ENCODE measurements at regions of chr11 and their contacts with region 1.

Region 1: GRCh38 chr11:65540297-65541092 is 15.6 kb downstream of the SCYL1 start:
- DNase-seq: peak; percentile 78 to 93 (median 88)
- ATAC-seq: peak; percentile 85
- H3K4me3 ChIP-seq: peak overlapping the region; percentile 77 to 80
- H3K4me3 Mint-ChIP-seq: peak overlapping the region; percentile 86
- H3K27ac ChIP-seq: peak overlapping the region; percentile 53 to 60
- H3K27ac Mint-ChIP-seq: peak overlapping the region; percentile 71
- H3K4me1 ChIP-seq: peaks cover 15% of the 10 kb centered on the region
- H3K4me1 Mint-ChIP-seq: peaks cover 19% of the 10 kb centered on the region
- H3K27me3 ChIP-seq: no peaks in the 10 kb centered on the region
- H3K27me3 Mint-ChIP-seq: no peaks in the 10 kb centered on the region
- CTCF ChIP-seq: peak; percentile 62

Region 2: GRCh38 chr11:65524741-65525545 is 15.6 kb before region 1 on chr11 and contains the start of gene SCYL1:
- CTCF ChIA-PET with region 1: interaction called, 27 read pairs
- POLR2A ChIA-PET with region 1: interaction called, 17 read pairs
- intact Hi-C with region 1: loop called in 1 of 2 experiments (anchors 1 kb)
- DNase-seq: peak; percentile 77 to 92 (median 83)
- ATAC-seq: peak; percentile 93
- H3K4me3 ChIP-seq: peak within 1 kb of the TSS; percentile 73 to 89
- H3K4me3 Mint-ChIP-seq: peak within 1 kb of the TSS; percentile 84
- H3K27ac ChIP-seq: peak within 1 kb of the TSS; percentile 53 to 68
- H3K27ac Mint-ChIP-seq: peak within 1 kb of the TSS; percentile 91
- H3K4me1 ChIP-seq: peaks cover 60% of the 10 kb centered on the region
- H3K4me1 Mint-ChIP-seq: peaks cover 52% of the 10 kb centered on the region
- H3K27me3 ChIP-seq: no peaks in the 10 kb centered on the region
- H3K27me3 Mint-ChIP-seq: no peaks in the 10 kb centered on the region
- CTCF ChIP-seq: no peak
- total RNA-seq, gene SCYL1: 55.8 to 60.4 TPM

Region 3: DNA sequence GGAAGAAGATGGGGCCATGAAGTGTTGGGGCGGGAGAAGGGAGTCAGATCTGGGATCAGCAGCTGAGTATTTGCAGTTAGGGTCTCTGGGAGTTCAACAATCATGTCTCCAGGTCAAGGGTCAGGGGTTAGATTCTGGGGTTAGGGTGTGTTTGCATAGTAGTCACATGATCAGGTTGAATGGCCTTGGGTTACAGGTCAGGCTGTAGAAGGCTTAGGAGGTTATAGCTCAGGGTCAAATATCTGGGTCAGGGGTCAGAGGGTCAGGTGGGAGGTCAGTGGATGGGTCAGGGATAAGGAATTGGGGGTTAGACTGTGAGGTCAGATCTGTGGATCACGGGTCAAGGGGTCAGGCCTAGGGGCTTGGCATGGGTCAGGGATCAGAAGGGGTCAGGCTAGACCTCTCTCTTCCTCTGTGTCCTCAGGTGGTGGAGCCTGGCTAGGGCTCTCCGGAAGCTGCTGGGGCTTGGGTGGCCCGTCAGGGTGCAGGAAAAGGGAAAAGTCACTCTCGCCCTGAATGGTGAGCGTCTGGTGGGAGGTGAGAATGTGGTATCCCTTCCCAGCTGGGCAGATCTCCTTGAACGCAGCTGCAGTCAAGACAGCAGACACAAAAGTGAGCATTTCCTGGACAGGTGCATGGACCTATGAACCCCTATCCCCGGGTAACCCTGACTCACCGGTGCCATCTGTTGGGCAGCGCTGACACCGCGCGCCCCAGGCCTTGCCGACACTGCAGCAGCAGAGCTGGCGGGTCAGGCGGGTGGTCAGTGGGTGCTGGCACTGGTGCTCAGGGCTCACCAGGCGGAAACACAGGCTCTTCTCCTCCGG is 11.3 kb after region 1 on chr11:
- CTCF ChIA-PET with region 1: interaction called, 55 read pairs
- POLR2A ChIA-PET with region 1: interaction called, 18 read pairs
- intact Hi-C with region 1: loop called in 1 of 2 experiments (anchors 1 kb)
- DNase-seq: peak in 7 of 9 experiments; percentile 51 to 80 (median 71)
- ATAC-seq: peak; percentile 26
- H3K4me3 ChIP-seq: no peak overlapping the region
- H3K4me3 Mint-ChIP-seq: peak overlapping the region; percentile 17
- H3K27ac ChIP-seq: no peak overlapping the region
- H3K27ac Mint-ChIP-seq: peak overlapping the region; percentile 69
- H3K4me1 ChIP-seq: peaks cover 78% of the 10 kb centered on the region
- H3K4me1 Mint-ChIP-seq: peaks cover 75% of the 10 kb centered on the region
- H3K27me3 ChIP-seq: no peaks in the 10 kb centered on the region
- H3K27me3 Mint-ChIP-seq: no peaks in the 10 kb centered on the region
- CTCF ChIP-seq: peak; percentile 53

Region 4: DNA sequence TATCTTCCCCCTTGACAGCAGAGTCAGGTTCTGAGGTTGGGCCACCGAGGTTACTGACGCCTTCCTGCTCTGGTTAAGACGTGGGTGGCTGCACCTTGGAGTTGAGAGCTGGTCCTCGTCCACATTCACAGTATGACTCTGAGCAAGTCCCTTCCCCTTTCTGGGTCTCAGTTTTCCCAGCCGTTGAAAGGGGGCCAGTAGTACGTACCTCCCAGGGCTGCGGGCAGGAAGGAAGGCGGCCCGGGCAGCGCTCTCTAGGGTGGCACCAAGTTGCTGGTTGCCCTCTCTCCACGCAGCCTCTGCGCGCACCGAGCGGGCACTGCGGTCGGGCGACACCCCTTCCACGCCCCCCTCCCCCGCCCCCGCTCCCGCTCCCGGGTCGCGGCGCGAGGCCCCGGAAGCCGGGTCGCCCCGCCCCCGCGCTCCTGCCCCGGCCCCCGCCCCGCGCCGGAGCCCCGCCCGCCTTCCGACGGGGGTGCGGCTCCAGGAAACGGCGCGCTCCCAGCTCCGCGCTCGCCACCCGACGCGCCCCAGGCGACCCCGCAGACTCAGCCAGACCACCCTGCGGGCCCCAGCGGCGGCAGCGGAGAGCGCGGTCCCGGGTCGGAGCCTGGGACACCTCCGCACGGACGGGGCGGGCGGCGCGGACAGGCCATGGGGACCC is 35.2 kb after region 1 on chr11 and contains the start of gene EHBP1L1:
- CTCF ChIA-PET with region 1: interaction called, 89 read pairs
- POLR2A ChIA-PET with region 1: interaction called, 50 read pairs
- intact Hi-C with region 1: loop called (anchors 1 kb)
- DNase-seq: peak; percentile 45 to 88 (median 75)
- ATAC-seq: peak; percentile 32
- H3K4me3 ChIP-seq: peak within 1 kb of the TSS; percentile 71 to 78
- H3K4me3 Mint-ChIP-seq: peak within 1 kb of the TSS; percentile 93
- H3K27ac ChIP-seq: peak within 1 kb of the TSS; percentile 49 to 89
- H3K27ac Mint-ChIP-seq: peak within 1 kb of the TSS; percentile 96
- H3K4me1 ChIP-seq: peaks cover 54% of the 10 kb centered on the region
- H3K4me1 Mint-ChIP-seq: peaks cover 55% of the 10 kb centered on the region
- H3K27me3 ChIP-seq: no peaks in the 10 kb centered on the region
- H3K27me3 Mint-ChIP-seq: no peaks in the 10 kb centered on the region
- CTCF ChIP-seq: no peak
- total RNA-seq, gene EHBP1L1: 64.7 to 65.1 TPM

Region 5: DNA sequence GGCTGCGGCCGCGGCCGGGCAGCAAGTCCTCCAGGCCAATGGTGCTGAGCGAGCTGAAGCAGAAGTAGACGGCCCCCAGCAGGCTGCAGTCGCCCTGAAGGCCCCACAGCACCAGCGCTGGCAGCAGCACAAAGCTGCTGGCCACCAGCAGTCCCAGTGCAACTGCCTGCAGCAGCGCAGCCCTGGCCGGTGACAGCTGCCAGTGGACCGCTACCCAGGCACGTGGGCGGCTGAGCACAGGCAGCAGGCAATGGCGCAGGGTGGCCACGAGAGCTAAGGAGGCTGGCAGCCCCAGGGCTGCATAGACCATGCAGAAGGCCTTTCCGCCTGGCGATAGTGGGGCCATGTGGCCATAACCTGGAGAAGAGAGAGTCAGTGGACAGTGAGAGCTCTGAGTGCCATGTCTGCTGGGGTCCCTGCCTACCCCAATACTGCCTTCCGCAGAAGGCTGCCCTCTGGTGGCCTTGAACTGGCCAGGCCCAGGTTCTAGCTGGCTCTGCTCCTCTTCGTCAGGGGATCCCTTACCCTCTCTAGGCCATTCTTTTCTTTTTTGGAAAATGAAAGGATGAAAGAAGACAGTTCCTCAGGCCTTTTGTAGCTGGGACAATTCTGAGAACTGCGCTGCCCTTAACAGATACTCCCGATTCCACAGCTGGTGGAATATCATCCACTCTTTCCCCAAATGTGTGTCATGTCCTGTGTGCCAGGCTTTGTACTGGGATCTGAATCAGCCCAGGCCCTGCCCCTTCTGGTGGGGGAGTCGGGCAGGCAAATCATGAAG is 53.2 kb after region 1 on chr11:
- CTCF ChIA-PET with region 1: interaction called, 139 read pairs
- POLR2A ChIA-PET with region 1: interaction called, 30 read pairs
- intact Hi-C with region 1: loop called (anchors 1 kb)
- DNase-seq: peak in 7 of 9 experiments; percentile 48 to 74 (median 64)
- ATAC-seq: peak; percentile 56
- H3K4me3 ChIP-seq: no peak overlapping the region
- H3K4me3 Mint-ChIP-seq: no peak overlapping the region
- H3K27ac ChIP-seq: no peak overlapping the region
- H3K27ac Mint-ChIP-seq: no peak overlapping the region
- H3K4me1 ChIP-seq: peaks cover 12% of the 10 kb centered on the region
- H3K4me1 Mint-ChIP-seq: peaks cover 11% of the 10 kb centered on the region
- H3K27me3 ChIP-seq: no peaks in the 10 kb centered on the region
- H3K27me3 Mint-ChIP-seq: no peaks in the 10 kb centered on the region
- CTCF ChIP-seq: peak; percentile 59

Region 6: GRCh38 chr11:65779851-65780577 is 239.5 kb after region 1 on chr11:
- CTCF ChIA-PET with region 1: no interaction called
- POLR2A ChIA-PET with region 1: no interaction called
- intact Hi-C with region 1: loop called in 1 of 2 experiments (anchors 10 kb)
- DNase-seq: peak; percentile 46 to 88 (median 76)
- ATAC-seq: peak; percentile 74
- H3K4me3 ChIP-seq: peak overlapping the region; percentile 85
- H3K4me3 Mint-ChIP-seq: peak overlapping the region; percentile 86
- H3K27ac ChIP-seq: peak overlapping the region; percentile 31 to 52
- H3K27ac Mint-ChIP-seq: peak overlapping the region; percentile 77
- H3K4me1 ChIP-seq: peaks cover 17% of the 10 kb centered on the region
- H3K4me1 Mint-ChIP-seq: peaks cover 8% of the 10 kb centered on the region
- H3K27me3 ChIP-seq: no peaks in the 10 kb centered on the region
- H3K27me3 Mint-ChIP-seq: peaks cover under 1% of the 10 kb centered on the region
- CTCF ChIP-seq: peak; percentile 97

Measured in CD8-positive, alpha-beta T cell (primary cell).